Activated naive CD4-positive, alpha-beta T cell treated with anti-CD3 and anti-CD28 coated beads for 36 hours (primary cell): ENCODE measurements at regions of chr18 and their contacts with region 1.

Region 1: GRCh38 chr18:34880882-34881834 is 160.1 kb upstream of the MAPRE2 start:
- DNase-seq: no peak
- H3K4me3 Mint-ChIP-seq: no peak overlapping the region
- H3K27ac Mint-ChIP-seq: no peak overlapping the region
- H3K4me1 Mint-ChIP-seq: no peaks in the 10 kb centered on the region
- H3K27me3 Mint-ChIP-seq: peaks cover 2% of the 10 kb centered on the region

Region 2: DNA sequence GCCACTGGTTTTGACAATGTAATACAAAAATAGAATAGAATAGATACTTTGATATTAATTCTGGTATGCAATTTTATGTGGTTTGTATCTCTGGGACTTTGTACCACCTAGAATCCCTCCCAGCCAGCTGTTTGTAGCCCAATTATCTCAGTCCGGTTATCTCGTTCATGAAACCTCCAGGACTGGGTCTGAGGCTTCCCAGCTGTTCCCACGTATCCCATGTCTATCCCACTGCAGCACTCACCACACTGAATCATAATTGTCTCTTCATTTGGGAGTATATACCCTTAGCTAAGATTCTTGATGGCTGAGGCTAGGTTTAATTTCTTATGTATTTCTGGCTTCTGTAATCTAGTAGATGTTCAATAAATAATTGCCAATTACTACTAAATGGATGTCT is 55.6 kb after region 1 on chr18:
- CTCF ChIA-PET with region 1: no interaction called
- intact Hi-C with region 1: loop called (anchors 5 kb)
- DNase-seq: no peak
- H3K4me3 Mint-ChIP-seq: no peak overlapping the region
- H3K27ac Mint-ChIP-seq: no peak overlapping the region
- H3K4me1 Mint-ChIP-seq: no peaks in the 10 kb centered on the region
- H3K27me3 Mint-ChIP-seq: peaks cover 7% of the 10 kb centered on the region

Region 3: GRCh38 chr18:34999756-35000289 is 118.7 kb after region 1 on chr18:
- CTCF ChIA-PET with region 1: no interaction called
- intact Hi-C with region 1: no loop called
- DNase-seq: no peak
- H3K4me3 Mint-ChIP-seq: no peak overlapping the region
- H3K27ac Mint-ChIP-seq: no peak overlapping the region
- H3K4me1 Mint-ChIP-seq: no peaks in the 10 kb centered on the region
- H3K27me3 Mint-ChIP-seq: no peaks in the 10 kb centered on the region